OCI-LY7 (cell line): ENCODE measurements at regions of chr4 and their contacts with region 1.

Region 1: GRCh38 chr4:48546336-48546735 is 56.3 kb downstream of the ZAR1 start:
- DNase-seq: peak; percentile 55
- H3K4me3 ChIP-seq: no peak overlapping the region
- H3K27ac ChIP-seq: no peak overlapping the region
- H3K4me1 ChIP-seq: no peaks in the 10 kb centered on the region
- CTCF ChIP-seq: peak; percentile 77

Region 2: DNA sequence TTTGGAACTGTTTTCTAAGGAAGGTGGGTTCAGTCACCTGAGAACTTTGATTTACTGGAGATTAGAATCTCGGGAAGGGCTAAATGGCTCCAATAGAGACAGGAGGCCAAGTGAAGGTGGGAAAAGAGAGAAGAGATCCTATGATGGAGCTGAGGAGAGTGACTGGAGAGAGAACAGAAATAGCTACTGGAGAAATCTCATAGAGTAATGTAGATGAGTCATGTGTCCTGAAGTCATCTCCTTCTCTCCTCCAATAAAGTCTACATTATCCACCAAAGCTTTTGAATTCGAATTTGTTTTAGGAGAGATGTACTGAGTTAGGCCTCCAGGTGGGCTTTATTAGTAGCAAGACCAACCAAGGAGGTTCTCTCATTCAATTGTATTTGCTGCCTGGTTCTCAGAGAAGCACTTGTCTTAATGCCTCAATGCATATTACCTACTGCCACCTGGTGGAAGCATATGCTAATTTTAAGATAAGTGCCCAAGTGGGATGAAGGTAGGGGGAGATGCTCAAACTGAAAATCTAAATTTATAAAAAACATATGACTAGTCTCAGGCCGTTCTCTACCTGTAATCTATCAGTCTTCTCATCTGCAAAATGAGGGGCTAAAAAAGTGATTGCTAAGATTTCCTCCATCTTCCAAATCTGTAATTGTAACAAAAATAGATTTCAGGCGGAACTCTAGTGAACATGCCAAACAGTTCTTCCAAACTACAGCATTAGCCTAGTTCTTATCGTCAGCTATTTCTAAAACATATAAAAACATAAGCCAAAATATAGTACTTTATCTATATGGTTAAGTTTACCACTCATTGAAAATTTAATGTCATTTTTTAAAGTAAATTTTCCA is 436.7 kb before region 1 on chr4:
- CTCF ChIA-PET with region 1: no interaction called
- POLR2A ChIA-PET with region 1: interaction called, 5 read pairs
- intact Hi-C with region 1: loop called (anchors 10 kb)
- DNase-seq: peak; percentile 77
- H3K4me3 ChIP-seq: no peak overlapping the region
- H3K27ac ChIP-seq: no peak overlapping the region
- H3K4me1 ChIP-seq: no peaks in the 10 kb centered on the region
- CTCF ChIP-seq: peak; percentile 92

Region 3: DNA sequence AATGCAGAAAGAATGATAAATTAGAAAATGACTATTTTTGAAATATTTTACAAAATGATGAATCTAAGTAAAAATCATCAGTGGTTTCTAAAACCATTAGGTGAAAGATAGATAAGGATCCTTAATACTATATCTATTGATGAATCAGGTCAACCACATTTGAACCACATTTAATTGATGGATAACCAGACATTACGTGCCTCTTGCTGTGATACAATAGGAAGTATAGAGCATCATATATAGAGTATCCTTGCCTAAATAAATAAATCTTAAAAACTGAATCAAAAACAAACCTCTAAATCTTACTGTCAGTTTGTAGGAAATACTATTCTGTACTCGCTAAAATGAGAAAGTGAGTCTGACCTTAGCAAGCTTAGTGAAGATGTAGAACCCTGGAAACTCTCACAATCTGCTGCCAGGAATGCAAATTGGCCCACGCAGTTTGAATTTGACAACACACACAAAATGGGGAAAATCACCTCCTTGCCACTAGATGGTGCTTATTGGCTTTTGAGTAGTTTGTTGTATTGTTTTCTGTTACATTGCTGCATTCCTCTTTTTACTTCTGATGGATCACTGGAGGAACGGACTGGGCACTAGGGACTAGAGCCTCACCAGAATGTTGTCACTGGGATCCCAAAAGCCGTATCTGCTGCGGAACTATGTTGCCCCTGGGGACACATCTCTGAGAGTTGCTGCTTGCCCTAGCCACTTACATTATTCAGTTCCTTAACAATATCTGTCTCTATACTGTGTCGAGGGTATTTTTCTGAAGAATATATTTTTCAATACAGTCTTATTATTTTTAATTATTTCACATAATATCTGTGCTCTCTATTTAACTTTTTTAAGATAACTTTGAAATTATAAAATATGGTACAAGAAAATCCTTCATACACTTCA is 230.4 kb before region 1 on chr4:
- CTCF ChIA-PET with region 1: no interaction called
- POLR2A ChIA-PET with region 1: no interaction called
- intact Hi-C with region 1: loop called (anchors 2 kb)
- DNase-seq: peak; percentile 53
- H3K4me3 ChIP-seq: no peak overlapping the region
- H3K27ac ChIP-seq: no peak overlapping the region
- H3K4me1 ChIP-seq: no peaks in the 10 kb centered on the region
- CTCF ChIP-seq: peak; percentile 85

Region 4: GRCh38 chr4:48445704-48446103 is 100.6 kb before region 1 on chr4:
- CTCF ChIA-PET with region 1: no interaction called
- POLR2A ChIA-PET with region 1: no interaction called
- intact Hi-C with region 1: loop called (anchors 10 kb)
- DNase-seq: peak; percentile 19
- H3K4me3 ChIP-seq: no peak overlapping the region
- H3K27ac ChIP-seq: no peak overlapping the region
- H3K4me1 ChIP-seq: no peaks in the 10 kb centered on the region
- CTCF ChIP-seq: peak; percentile 72